GM12878 (cell line): ENCODE measurements at regions of chr5 and their contacts with region 1.

Region 1: GRCh38 chr5:170338933-170339779 is 41.6 kb upstream of the LCP2 start:
- DNase-seq: no peak
- ATAC-seq: peak; percentile 95
- H3K4me3 ChIP-seq: no peak overlapping the region
- H3K27ac ChIP-seq: no peak overlapping the region
- H3K4me1 ChIP-seq: peaks cover 13% of the 10 kb centered on the region
- H3K27me3 ChIP-seq: no peaks in the 10 kb centered on the region
- CTCF ChIP-seq: peak; percentile 95 to 100 (median 97); a peak in 5 of 6 replicates
- EP300 ChIP-seq: no peak
- POLR2A ChIP-seq: no peak
- RAD21 ChIP-seq: peak; percentile 98

Region 2: GRCh38 chr5:170225326-170226128 is 113.6 kb before region 1 on chr5:
- CTCF ChIA-PET with region 1: interaction called, 120 read pairs
- POLR2A ChIA-PET with region 1: no interaction called
- RAD21 ChIA-PET with region 1: interaction called, 60 read pairs
- SMC1A ChIA-PET with region 1: interaction called, 66 read pairs
- in situ Hi-C with region 1: no loop called
- intact Hi-C with region 1: loop called (anchors 1 kb)
- DNase-seq: peak; percentile 4
- ATAC-seq: peak; percentile 93
- H3K4me3 ChIP-seq: no peak overlapping the region
- H3K27ac ChIP-seq: no peak overlapping the region
- H3K4me1 ChIP-seq: no peaks in the 10 kb centered on the region
- H3K27me3 ChIP-seq: no peaks in the 10 kb centered on the region; a peak in 1 of 4 replicates
- CTCF ChIP-seq: peak; percentile 72 to 91 (median 76)
- EP300 ChIP-seq: no peak
- POLR2A ChIP-seq: no peak
- RAD21 ChIP-seq: peak; percentile 98

Region 3: DNA sequence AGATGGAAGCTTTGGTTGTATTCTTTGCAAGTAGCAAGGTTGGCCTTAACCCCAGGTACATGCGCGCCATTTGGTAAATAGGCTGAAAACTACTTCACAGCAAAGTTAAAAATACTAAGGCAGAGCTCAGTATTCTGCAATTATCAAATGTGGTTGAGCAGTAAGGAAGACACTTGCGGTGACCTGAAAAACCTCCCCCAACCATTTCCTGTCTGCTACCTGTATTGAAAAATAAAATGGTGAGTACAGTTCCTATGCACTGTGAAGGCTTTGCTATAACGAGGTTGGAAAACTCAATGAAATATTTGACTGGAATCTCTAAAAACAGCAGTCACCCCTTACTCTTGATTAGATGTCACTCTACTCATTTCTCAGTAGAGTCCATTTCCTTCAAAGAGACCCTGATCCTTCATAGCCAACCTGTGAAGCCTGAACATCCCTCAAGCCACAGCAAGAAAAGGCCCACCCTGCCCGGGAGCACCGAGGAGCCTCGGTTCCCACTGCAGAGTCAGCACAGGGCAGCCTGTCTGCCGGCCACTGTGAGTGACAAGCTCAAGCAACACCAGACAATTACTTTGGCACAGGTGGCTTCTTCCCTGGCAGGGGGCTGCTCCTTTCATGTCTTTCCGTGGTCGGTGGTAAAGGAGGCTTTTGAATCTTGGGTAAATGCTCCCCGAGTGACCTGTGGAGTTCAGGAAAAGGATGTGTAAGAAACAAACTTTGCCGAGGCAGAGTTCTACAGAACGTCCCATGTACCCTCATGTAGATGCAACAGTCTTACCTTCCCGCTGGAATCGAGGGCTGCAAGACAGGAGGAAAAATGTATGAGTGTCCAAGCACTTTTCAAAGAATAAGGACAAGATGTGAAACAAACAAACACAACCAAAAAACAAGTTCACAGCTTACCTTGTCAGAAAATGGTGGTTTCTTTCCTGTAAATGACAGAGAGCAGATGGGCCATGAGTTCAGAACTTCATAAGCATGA is 76.8 kb before region 1 on chr5:
- CTCF ChIA-PET with region 1: interaction called, 189 read pairs
- POLR2A ChIA-PET with region 1: interaction called, 19 read pairs
- RAD21 ChIA-PET with region 1: interaction called, 88 read pairs
- SMC1A ChIA-PET with region 1: interaction called, 122 read pairs
- in situ Hi-C with region 1: no loop called
- intact Hi-C with region 1: no loop called
- DNase-seq: no peak
- ATAC-seq: no peak
- H3K4me3 ChIP-seq: no peak overlapping the region
- H3K27ac ChIP-seq: no peak overlapping the region
- H3K4me1 ChIP-seq: no peaks in the 10 kb centered on the region
- H3K27me3 ChIP-seq: no peaks in the 10 kb centered on the region
- CTCF ChIP-seq: no peak
- EP300 ChIP-seq: no peak
- POLR2A ChIP-seq: no peak
- RAD21 ChIP-seq: no peak

Region 4: GRCh38 chr5:170293273-170293672 is 45.9 kb before region 1 on chr5:
- CTCF ChIA-PET with region 1: interaction called, 139 read pairs
- POLR2A ChIA-PET with region 1: interaction called, 169 read pairs
- RAD21 ChIA-PET with region 1: interaction called, 274 read pairs
- SMC1A ChIA-PET with region 1: interaction called, 274 read pairs
- in situ Hi-C with region 1: no loop called
- intact Hi-C with region 1: loop called (anchors 2 kb)
- DNase-seq: peak; percentile 87
- ATAC-seq: peak; percentile 86
- H3K4me3 ChIP-seq: peak overlapping the region; percentile 77
- H3K27ac ChIP-seq: no peak overlapping the region
- H3K4me1 ChIP-seq: peaks cover 15% of the 10 kb centered on the region
- H3K27me3 ChIP-seq: no peaks in the 10 kb centered on the region
- CTCF ChIP-seq: peak in 1 of 3 experiments; percentile 19; a peak in 1 of 6 replicates
- EP300 ChIP-seq: peak in 1 of 2 experiments; percentile 80; a peak in 2 of 4 replicates
- POLR2A ChIP-seq: no peak
- RAD21 ChIP-seq: peak; percentile 34; the same call in 1 of the 2 replicates

Region 5: GRCh38 chr5:170388818-170389549 is 49.8 kb after region 1 on chr5 and contains the start of gene KCNMB1:
- CTCF ChIA-PET with region 1: interaction called, 15 read pairs
- POLR2A ChIA-PET with region 1: interaction called, 3 read pairs
- RAD21 ChIA-PET with region 1: interaction called, 9 read pairs
- SMC1A ChIA-PET with region 1: interaction called, 16 read pairs
- in situ Hi-C with region 1: no loop called
- intact Hi-C with region 1: loop called (anchors 5 kb)
- DNase-seq: no peak
- ATAC-seq: peak; percentile 57
- H3K4me3 ChIP-seq: peak within 1 kb of the TSS; percentile 5; the same call in 1 of the 2 replicates
- H3K27ac ChIP-seq: peak within 1 kb of the TSS; percentile 22; the same call in 1 of the 2 replicates
- H3K4me1 ChIP-seq: peaks cover 20% of the 10 kb centered on the region
- H3K27me3 ChIP-seq: no peaks in the 10 kb centered on the region
- CTCF ChIP-seq: no peak
- EP300 ChIP-seq: no peak
- POLR2A ChIP-seq: no peak
- RAD21 ChIP-seq: no peak
- polyA plus RNA-seq, gene KCNMB1: 2.3 to 2.8 TPM